ENCODE measurements at regions of chr6 and their contacts with region 1.

Region 1: DNA sequence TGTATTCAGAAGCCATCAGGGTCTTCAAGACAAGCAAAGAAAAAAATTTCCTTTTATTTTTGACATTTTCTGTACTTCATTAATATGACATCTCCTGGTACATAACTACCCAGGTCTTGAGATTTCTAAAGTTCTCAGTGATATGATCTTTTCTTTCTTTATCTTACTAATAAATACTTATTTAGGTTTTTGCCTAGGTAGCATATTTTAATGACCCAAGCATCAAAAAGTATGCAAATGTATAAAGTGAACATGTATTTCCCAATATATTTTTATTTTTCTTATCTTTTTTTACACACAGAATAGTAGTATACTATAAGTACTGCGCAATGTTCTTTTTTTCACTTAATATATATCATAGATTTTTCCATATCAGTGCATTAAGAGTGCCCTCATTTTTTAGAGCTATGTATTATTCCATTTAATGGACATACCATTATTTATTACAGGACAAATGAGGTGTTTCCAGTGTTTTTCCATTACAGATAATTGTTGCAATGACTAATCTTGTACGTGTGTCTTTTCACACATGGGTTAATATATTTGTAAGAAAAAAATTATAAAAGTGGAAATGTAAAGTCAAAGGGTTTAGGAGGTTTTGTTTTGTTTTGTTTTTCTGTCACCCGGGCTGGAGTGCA is 107.0 kb downstream of the KCNQ5 start:
- DNase-seq: no peak
- H3K4me3 Mint-ChIP-seq: no peak overlapping the region
- H3K27ac Mint-ChIP-seq: no peak overlapping the region
- H3K4me1 Mint-ChIP-seq: no peaks in the 10 kb centered on the region
- H3K27me3 Mint-ChIP-seq: no peaks in the 10 kb centered on the region

Region 2: DNA sequence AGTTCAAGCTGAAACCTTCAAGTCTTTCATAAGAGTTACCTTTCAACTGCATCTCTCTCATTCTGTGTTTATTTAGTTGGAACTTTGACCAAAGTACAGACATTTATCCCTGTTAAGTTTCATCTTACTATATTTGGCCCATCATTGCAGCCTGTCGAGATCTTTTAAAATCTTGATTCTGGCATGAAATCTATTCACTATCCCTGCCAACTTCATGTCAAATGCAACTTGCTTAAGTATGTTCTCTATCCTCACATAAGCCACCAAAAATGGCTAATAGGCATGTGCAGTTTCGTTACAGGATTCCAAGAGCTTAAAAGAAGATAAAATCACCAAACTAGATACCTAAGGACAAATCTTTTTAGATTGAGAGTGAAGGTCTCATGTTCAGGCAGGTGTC is 224.4 kb before region 1 on chr6:
- intact Hi-C with region 1: no loop called
- DNase-seq: no peak
- H3K4me3 Mint-ChIP-seq: no peak overlapping the region
- H3K27ac Mint-ChIP-seq: no peak overlapping the region
- H3K4me1 Mint-ChIP-seq: no peaks in the 10 kb centered on the region
- H3K27me3 Mint-ChIP-seq: peaks cover 10% of the 10 kb centered on the region

Region 3: DNA sequence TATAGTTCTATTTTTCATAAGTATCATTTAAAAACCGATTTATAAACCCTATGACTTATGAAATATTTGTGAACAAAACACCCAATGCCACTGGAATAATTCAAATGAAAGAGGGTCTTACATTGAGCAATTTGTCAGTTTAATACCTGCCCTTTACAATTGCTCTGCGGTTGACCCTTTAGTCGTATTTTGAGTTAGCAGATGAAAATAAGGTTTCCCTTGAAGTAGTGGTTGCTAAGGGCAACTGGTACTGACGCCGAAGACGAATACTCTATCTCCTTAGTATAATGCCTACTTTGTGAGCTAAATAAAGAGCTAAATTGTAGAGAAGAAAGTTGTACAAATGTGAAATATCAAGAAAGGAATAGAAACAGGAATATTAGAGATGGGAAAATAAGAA is 37.6 kb before region 1 on chr6:
- intact Hi-C with region 1: loop called (anchors 5 kb)
- DNase-seq: no peak
- H3K4me3 Mint-ChIP-seq: no peak overlapping the region
- H3K27ac Mint-ChIP-seq: no peak overlapping the region
- H3K4me1 Mint-ChIP-seq: peaks cover 9% of the 10 kb centered on the region
- H3K27me3 Mint-ChIP-seq: no peaks in the 10 kb centered on the region

Measured in activated T-helper 2 cell treated with anti-CD3 and anti-CD28 coated beads, Interferon-gamma antibody, Interleukin-2, Interleukin-4, amounts not matched to agents 10 μg/mL and 5 μg/mL and 100 μg/mL, durations not matched to agents 14 hours and 24 hours and 36 hours (primary cell).